Psoas muscle (tissue), 8 donors: ENCODE measurements at regions of chr1 and their contacts with region 1.

Region 1: GRCh38 chr1:28552758-28553663 is at the start of gene TRNAU1AP:
- DNase-seq: peak; percentile 95 to 98
- ATAC-seq: peak; percentile 98
- H3K4me3 ChIP-seq: peak within 1 kb of the TSS; percentile 86
- H3K27ac ChIP-seq: peak within 1 kb of the TSS; percentile 88
- H3K4me1 ChIP-seq: peaks cover 7% of the 10 kb centered on the region
- H3K27me3 ChIP-seq: no peaks in the 10 kb centered on the region
- CTCF ChIP-seq: no peak
- total RNA-seq, gene TRNAU1AP: 7.5 to 17.5 (median 12.2) TPM

Region 2: GRCh38 chr1:28494737-28495136 is 58.3 kb before region 1 on chr1:
- intact Hi-C with region 1: no loop called
- DNase-seq: no peak
- ATAC-seq: no peak
- H3K4me3 ChIP-seq: no peak overlapping the region
- H3K27ac ChIP-seq: no peak overlapping the region
- H3K4me1 ChIP-seq: no peaks in the 10 kb centered on the region
- H3K27me3 ChIP-seq: no peaks in the 10 kb centered on the region
- CTCF ChIP-seq: no peak

Region 3: DNA sequence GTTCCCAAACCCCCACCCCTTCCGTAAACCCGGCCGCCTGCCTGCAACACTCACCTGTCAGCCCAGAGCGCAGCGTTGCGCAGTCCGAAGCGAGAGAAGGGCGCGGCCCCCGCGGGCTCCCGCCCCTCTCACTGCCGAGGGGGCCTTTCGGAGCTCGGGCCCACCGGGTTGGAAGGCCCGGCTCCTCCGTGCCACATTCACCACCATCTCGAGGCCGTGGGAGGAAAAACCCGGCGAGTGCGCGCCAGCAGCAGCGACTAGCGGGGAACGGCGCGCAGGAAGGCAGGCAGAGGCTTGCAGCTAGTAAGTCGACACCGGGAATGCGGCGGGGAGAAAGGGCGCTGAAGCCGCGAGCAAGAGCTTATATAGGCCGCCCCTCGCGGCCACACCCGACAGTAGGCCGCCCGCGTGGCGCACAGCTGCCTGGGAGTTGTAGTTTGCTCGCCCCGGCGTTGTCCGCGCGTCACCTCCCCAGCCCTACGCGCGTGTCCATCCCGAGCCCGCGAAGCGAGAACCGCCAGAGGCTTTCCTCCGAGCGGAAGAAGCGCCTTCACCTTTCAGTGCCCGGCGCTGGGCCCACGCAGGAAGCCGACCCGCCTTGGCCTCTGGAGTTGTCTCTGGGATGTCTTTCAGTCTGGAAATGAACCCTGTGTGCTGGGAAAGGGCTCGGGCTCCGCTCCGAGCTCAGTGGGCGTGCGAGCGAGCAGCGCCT is 28.7 kb after region 1 on chr1:
- intact Hi-C with region 1: loop called (anchors 2 kb)
- DNase-seq: peak; percentile 96 to 98
- ATAC-seq: peak; percentile 96 to 97 (median 97)
- H3K4me3 ChIP-seq: peak overlapping the region; percentile 85
- H3K27ac ChIP-seq: peak overlapping the region; percentile 90
- H3K4me1 ChIP-seq: peaks cover 18% of the 10 kb centered on the region
- H3K27me3 ChIP-seq: no peaks in the 10 kb centered on the region
- CTCF ChIP-seq: no peak